CD14-positive monocyte (primary cell): ENCODE measurements at regions of chr1 and their contacts with region 1.

Region 1: DNA sequence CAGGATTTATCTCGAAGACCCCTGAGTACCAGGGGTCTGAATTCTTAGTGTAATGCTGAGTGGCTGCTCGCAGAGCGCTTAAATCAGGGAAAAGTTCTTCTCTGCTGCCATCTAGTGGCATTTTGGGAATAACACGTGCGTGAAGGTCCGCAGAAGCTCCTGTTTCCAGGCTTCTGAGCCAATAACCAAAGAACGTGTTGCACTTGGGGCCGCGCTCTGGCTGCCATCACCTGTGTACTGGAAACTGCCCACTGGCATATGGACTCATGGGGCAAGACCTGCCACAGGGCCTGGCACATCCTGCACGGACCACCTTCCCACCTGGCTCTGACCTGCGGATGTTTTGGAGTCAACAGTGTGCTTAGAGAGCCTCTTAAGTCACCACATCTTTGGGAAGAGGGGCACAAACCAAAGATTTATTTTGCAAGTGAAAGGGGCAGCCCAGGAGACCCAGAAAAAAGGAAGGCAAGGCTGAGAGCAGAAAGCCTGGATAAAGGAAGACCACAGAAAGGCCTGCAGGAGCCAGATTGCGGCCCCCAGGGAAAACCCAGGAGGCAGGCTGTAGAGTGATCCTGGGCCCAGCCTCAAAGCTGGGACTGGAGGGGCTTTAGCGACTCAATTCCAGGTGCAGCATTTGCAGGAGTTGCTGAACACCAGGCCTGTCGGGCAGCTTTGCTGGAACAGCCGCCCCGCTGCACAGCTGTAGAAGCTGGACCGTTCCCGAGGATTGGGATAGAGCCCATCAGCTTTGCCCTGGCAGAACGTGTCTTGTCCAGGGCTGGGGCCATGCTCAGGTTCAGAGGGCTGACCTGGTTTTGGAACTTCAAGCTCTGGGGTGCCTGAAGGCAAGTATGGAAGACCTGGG is 13.0 kb downstream of the CHIT1 start:
- DNase-seq: peak; percentile 54 to 75 (median 68)
- H3K4me3 ChIP-seq: no peak overlapping the region
- H3K4me3 Mint-ChIP-seq: peak overlapping the region in 1 of 2 donors; percentile 62
- H3K27ac ChIP-seq: no peak overlapping the region
- H3K27ac Mint-ChIP-seq: peak overlapping the region in 4 of 7 donors; percentile 3 to 76 (median 23)
- H3K4me1 ChIP-seq: peaks cover 31 to 39% of the 10 kb centered on the region in 2 donors
- H3K4me1 Mint-ChIP-seq: peaks cover 44% of the 10 kb centered on the region
- H3K27me3 ChIP-seq: peaks cover 0 to 5% of the 10 kb centered on the region in 2 donors
- H3K27me3 Mint-ChIP-seq: peaks cover 7 to 30% (median 30%) of the 10 kb centered on the region in 3 donors
- CTCF ChIP-seq: peak; percentile 90

Region 2: DNA sequence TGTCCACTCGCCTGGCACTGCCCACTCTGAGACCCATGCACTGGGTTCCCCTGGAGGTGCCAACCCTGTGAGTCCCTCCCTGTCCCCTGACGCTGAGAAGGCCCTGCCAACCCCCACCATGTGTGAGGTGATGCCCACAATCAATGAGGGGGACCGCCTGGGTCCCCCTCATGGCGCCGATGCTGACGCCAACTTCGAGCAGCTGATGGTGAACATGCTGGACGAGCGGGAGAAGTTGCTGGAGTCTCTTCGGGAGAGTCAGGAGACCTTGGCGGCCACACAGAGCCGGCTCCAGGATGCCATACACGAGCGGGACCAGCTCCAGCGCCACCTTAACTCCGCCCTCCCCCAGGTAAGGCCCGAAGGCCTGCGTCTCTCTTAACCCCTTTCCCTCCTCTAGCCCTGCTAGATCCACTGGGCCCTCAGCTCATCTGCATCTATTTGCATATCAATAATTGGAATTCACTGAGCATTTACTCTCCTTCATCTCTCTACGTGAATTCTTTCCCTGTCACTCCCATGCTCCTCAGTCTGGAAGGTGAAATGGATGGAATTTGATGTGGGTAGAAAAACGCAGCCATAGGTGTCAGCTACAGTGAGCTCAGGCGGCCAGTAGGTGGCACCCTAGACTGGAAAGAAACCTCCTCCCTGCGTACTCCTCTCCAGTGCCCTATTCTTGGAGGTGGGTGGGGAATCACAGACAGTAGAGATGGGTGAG is 177.5 kb before region 1 on chr1:
- intact Hi-C with region 1: loop called (anchors 2 kb)
- DNase-seq: peak; percentile 53 to 71 (median 68)
- H3K4me3 ChIP-seq: no peak overlapping the region
- H3K4me3 Mint-ChIP-seq: peak overlapping the region in 1 of 2 donors; percentile 35
- H3K27ac ChIP-seq: no peak overlapping the region
- H3K27ac Mint-ChIP-seq: no peak overlapping the region
- H3K4me1 ChIP-seq: no peaks in the 10 kb centered on the region
- H3K4me1 Mint-ChIP-seq: peaks cover 12% of the 10 kb centered on the region
- H3K27me3 ChIP-seq: peaks cover 0 to 2% of the 10 kb centered on the region in 2 donors
- H3K27me3 Mint-ChIP-seq: peaks cover 3 to 36% (median 17%) of the 10 kb centered on the region in 3 donors
- CTCF ChIP-seq: peak; percentile 95

Region 3: GRCh38 chr1:203117611-203118575 is 98.6 kb before region 1 on chr1:
- intact Hi-C with region 1: loop called (anchors 1 to 2 kb)
- DNase-seq: peak; percentile 32 to 62 (median 55)
- H3K4me3 ChIP-seq: no peak overlapping the region
- H3K4me3 Mint-ChIP-seq: peak overlapping the region in 1 of 2 donors; percentile 76
- H3K27ac ChIP-seq: no peak overlapping the region
- H3K27ac Mint-ChIP-seq: peak overlapping the region in 1 of 7 donors; percentile 42
- H3K4me1 ChIP-seq: peaks cover 6 to 10% of the 10 kb centered on the region in 2 donors
- H3K4me1 Mint-ChIP-seq: peaks cover 11% of the 10 kb centered on the region
- H3K27me3 ChIP-seq: peaks cover 27 to 83% of the 10 kb centered on the region in 2 donors
- H3K27me3 Mint-ChIP-seq: peaks cover 46 to 68% (median 66%) of the 10 kb centered on the region in 3 donors
- CTCF ChIP-seq: peak; percentile 87

Region 4: GRCh38 chr1:203172128-203173010 is 44.1 kb before region 1 on chr1:
- intact Hi-C with region 1: loop called (anchors 5 kb)
- DNase-seq: peak; percentile 29 to 50 (median 45)
- H3K4me3 ChIP-seq: no peak overlapping the region
- H3K4me3 Mint-ChIP-seq: peak overlapping the region in 1 of 2 donors; percentile 15
- H3K27ac ChIP-seq: no peak overlapping the region
- H3K27ac Mint-ChIP-seq: peak overlapping the region in 2 of 7 donors; percentile 8 to 23
- H3K4me1 ChIP-seq: peaks cover 30 to 31% of the 10 kb centered on the region in 2 donors
- H3K4me1 Mint-ChIP-seq: peaks cover 41% of the 10 kb centered on the region
- H3K27me3 ChIP-seq: no peaks in the 10 kb centered on the region
- H3K27me3 Mint-ChIP-seq: peaks cover 9 to 15% (median 11%) of the 10 kb centered on the region in 3 donors
- CTCF ChIP-seq: peak; percentile 98

Region 5: GRCh38 chr1:203177470-203178039 is 39.0 kb before region 1 on chr1:
- intact Hi-C with region 1: loop called (anchors 5 kb)
- DNase-seq: peak in 2 of 3 donors; percentile 28 to 58
- H3K4me3 ChIP-seq: no peak overlapping the region
- H3K4me3 Mint-ChIP-seq: no peak overlapping the region
- H3K27ac ChIP-seq: no peak overlapping the region
- H3K27ac Mint-ChIP-seq: peak overlapping the region in 2 of 7 donors; percentile 35 to 57
- H3K4me1 ChIP-seq: peaks cover 38 to 46% of the 10 kb centered on the region in 2 donors
- H3K4me1 Mint-ChIP-seq: peaks cover 61% of the 10 kb centered on the region
- H3K27me3 ChIP-seq: no peaks in the 10 kb centered on the region
- H3K27me3 Mint-ChIP-seq: peaks cover 3 to 12% (median 9%) of the 10 kb centered on the region in 3 donors
- CTCF ChIP-seq: no peak

Region 6: GRCh38 chr1:203304919-203305808 is 88.7 kb after region 1 on chr1 and contains the start of gene BTG2:
- intact Hi-C with region 1: no loop called
- DNase-seq: peak; percentile 92 to 96 (median 93)
- H3K4me3 ChIP-seq: peak within 1 kb of the TSS; percentile 81 to 99 (median 97)
- H3K4me3 Mint-ChIP-seq: peak within 1 kb of the TSS; percentile 93 to 100
- H3K27ac ChIP-seq: peak within 1 kb of the TSS; percentile 98 to 100
- H3K27ac Mint-ChIP-seq: peak within 1 kb of the TSS; percentile 97 to 99 (median 98)
- H3K4me1 ChIP-seq: peaks cover 54 to 68% of the 10 kb centered on the region in 2 donors
- H3K4me1 Mint-ChIP-seq: peaks cover 69% of the 10 kb centered on the region
- H3K27me3 ChIP-seq: no peaks in the 10 kb centered on the region
- H3K27me3 Mint-ChIP-seq: peaks cover 0 to 3% (median 2%) of the 10 kb centered on the region in 3 donors
- CTCF ChIP-seq: no peak
- polyA plus RNA-seq, gene BTG2: 293 to 539 (median 483) TPM